Sigmoid colon (tissue), 7 donors: ENCODE measurements at regions of chr19 and their contacts with region 1.

Region 1: DNA sequence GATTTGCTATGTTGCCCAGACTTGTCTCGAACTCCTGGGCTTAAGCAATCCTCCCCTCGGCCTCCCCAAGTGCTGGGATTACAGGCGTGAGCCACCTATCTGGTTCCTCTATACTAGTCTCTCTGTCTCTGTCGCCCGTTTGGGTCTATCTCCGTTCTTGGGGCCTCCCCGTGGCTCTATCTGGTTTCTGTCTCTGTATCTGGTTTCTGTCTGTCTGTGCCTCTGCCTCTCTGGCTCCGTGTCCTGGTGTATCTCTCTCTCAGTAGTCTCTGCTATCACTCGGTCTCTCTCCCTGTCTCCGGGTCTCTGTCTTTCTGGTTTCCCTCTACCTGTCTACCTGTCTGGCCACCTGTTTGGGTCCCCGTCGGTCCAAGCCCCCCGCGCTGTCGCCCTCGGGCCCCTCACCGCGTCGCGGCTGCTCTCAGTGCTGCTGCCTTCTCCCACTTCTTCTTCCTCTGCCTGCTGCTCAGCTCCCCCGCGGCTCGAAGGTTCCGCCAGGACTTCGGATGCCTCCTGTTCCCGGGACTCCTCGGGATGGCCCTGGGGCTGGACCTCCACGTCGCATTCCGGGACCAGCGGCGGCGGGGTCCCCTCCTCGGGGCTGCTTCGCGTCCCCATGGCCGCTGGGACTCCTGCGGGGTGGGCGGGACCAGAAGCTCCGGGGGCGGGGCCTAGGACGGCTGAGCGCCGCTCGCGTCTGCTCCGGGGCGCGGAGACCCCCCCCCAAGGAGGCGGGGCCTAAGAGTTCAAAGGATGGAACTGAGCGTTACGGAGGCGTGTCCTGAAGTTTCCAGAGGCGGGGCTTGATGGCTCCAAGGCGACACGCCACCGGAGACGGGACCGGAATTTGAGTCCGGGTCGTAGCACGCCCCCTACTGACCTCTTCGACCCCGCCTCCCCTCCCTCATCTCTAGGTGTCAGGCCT is 783 bp downstream of the PHLDB3 start:
- DNase-seq: peak; percentile 98
- H3K4me3 ChIP-seq: peak overlapping the region; percentile 64 to 90 (median 70)
- H3K27ac ChIP-seq: peak overlapping the region; percentile 94 to 96 (median 96)
- H3K4me1 ChIP-seq: peaks cover 0 to 34% (median 21%) of the 10 kb centered on the region in 4 donors
- H3K27me3 ChIP-seq: no peaks in the 10 kb centered on the region
- CTCF ChIP-seq: no peak
- EP300 ChIP-seq: no peak
- POLR2A ChIP-seq: peak; percentile 26 to 48

Region 2: DNA sequence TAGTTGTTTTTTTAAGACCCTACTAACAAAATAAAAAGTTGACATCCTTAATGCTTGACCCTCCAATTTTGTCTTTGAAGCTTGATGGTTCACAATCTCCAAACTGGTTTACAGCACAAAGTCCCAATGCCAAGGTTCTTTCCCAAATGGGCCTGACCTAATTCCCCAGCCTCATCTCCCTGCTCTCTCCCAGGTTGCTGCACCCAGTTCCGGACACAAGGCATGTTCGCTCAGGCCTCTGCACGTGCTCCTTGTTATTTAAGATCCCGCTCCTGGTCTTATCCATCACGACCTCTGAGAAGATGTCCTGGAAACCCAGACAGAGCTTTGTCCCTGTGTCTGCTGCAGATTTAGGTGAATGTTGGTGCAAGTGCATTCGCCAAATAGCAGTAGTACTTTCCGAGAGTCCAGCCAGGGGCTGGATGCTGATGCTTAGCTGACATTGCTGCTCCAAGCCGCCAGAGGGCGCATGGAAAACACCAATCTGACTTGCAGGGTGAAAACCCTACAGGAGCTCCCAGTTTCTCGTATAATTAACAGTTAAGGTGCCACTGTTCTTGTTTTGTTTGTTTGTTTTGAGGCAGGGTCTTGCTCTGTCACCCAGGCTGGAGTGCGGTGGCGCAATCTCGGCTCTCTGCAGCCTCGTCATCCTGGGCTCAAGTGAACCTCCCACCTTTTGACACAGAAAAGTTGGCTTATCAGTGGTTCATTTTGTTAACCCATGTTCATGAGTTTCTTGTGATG is 56.8 kb before region 1 on chr19:
- intact Hi-C with region 1: loop called (anchors 5 kb)
- DNase-seq: peak; percentile 88
- H3K4me3 ChIP-seq: no peak overlapping the region
- H3K27ac ChIP-seq: no peak overlapping the region
- H3K4me1 ChIP-seq: peaks cover 0 to 3% (median 0%) of the 10 kb centered on the region in 4 donors
- H3K27me3 ChIP-seq: no peaks in the 10 kb centered on the region
- CTCF ChIP-seq: peak; percentile 82 to 98 (median 92)
- EP300 ChIP-seq: no peak
- POLR2A ChIP-seq: no peak

Region 3: GRCh38 chr19:43463381-43464136 is 40.2 kb before region 1 on chr19:
- intact Hi-C with region 1: loop called (anchors 5 kb)
- DNase-seq: peak; percentile 98
- H3K4me3 ChIP-seq: peak overlapping the region; percentile 59 to 73 (median 69)
- H3K27ac ChIP-seq: peak overlapping the region; percentile 88 to 93 (median 90)
- H3K4me1 ChIP-seq: peaks cover 0 to 18% (median 13%) of the 10 kb centered on the region in 4 donors
- H3K27me3 ChIP-seq: no peaks in the 10 kb centered on the region
- CTCF ChIP-seq: no peak
- EP300 ChIP-seq: no peak
- POLR2A ChIP-seq: no peak

Region 4: DNA sequence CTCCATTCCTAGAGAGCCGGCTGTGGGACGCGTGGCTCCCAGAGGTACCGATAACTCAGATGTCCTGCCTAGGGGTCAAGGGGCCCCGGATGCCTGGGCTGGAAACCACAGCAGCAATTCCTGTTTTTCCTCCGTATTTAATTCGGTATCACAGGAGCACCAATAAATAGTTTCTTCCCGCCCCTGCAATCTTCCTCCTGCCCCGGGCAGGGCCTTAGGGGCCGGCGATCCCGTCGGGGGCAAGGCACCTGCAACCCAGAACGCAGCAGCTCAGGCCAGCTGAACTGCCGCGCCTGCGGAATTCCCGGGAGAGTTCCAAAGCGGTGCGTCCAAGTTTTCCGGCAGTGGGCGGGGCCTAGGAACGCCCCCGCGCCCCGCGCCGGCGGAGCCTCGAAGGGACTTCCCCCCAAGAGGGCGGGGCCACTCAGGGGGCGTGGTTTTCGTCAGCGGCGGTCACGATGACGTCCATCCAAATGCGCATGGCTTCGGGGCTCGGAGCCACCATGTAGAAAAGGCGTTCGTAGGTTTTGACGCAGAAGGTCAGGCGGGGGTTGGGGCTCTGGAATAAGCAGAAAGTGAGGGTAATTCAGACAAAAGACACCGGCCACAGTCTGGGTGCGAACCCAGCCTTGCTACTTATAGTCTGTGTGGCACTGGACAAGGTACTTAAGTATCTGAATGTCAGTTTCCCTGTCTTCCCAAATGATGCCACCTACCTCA is 28.6 kb before region 1 on chr19:
- intact Hi-C with region 1: loop called (anchors 1 kb)
- DNase-seq: peak; percentile 98
- H3K4me3 ChIP-seq: peak overlapping the region; percentile 9 to 50 (median 40)
- H3K27ac ChIP-seq: peak overlapping the region; percentile 75 to 80 (median 78)
- H3K4me1 ChIP-seq: peaks cover 0 to 10% (median 8%) of the 10 kb centered on the region in 4 donors
- H3K27me3 ChIP-seq: no peaks in the 10 kb centered on the region
- CTCF ChIP-seq: no peak
- EP300 ChIP-seq: peak in 3 of 4 donors; percentile 56 to 88 (median 77)
- POLR2A ChIP-seq: peak in 1 of 2 donors; percentile 41

Region 5: DNA sequence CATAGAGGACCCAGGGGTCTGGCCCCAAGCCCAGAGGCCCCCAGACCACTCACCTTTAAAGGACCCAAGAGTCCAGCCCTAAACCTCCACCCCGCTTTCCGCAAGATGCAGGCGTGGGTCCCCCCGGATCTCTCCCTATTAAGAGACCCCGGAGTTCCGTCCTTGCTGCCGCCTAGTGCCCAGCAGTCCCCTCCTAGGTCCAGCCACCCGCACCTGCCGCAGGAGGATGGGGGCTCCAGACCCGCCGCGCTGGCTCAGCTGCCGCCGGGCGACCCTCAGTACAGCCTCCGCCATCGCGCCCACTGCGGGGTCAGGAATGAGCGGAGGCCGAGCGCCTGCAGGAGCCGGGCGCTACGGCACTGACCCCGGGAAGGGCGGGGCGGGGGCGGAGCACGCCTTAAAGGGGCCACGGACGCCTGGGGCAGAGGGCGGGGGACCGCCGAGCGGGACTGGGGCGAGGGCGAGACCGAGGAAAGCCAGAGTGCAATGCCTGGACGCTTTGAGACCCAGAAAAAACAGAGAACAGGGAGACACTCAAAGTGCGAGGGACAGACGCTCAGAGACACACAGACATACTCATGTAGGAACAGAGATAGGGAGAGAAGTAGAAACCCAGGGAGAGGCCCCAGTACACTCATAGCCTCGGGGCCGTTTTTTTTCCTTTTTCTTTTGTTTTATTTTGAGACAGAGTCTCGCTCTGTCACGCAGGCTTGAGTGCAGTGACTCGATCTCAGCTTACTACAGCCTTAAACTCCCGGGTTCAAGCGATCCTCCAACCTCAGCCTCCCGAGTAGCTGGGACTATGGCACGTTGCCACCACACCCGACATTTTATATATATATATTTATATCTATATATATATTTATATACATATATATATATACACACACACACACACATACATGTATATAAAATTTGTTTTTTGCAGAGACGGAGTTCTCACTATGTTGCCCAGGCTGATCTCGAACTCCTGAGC is 23.4 kb after region 1 on chr19 and contains the start of gene ETHE1:
- intact Hi-C with region 1: loop called (anchors 2 kb)
- DNase-seq: peak; percentile 93
- H3K4me3 ChIP-seq: peak within 1 kb of the TSS; percentile 58 to 83 (median 82)
- H3K27ac ChIP-seq: peak within 1 kb of the TSS; percentile 80 to 88 (median 88)
- H3K4me1 ChIP-seq: peaks cover 0 to 34% (median 31%) of the 10 kb centered on the region in 4 donors
- H3K27me3 ChIP-seq: no peaks in the 10 kb centered on the region
- CTCF ChIP-seq: peak in 1 of 4 experiments; percentile 17
- EP300 ChIP-seq: no peak
- POLR2A ChIP-seq: peak; percentile 67 to 89
- total RNA-seq, gene ETHE1: 40.7 to 57.9 (median 52.1) TPM